ENCODE measurements at regions of chr2 and their contacts with region 1.

Region 1: DNA sequence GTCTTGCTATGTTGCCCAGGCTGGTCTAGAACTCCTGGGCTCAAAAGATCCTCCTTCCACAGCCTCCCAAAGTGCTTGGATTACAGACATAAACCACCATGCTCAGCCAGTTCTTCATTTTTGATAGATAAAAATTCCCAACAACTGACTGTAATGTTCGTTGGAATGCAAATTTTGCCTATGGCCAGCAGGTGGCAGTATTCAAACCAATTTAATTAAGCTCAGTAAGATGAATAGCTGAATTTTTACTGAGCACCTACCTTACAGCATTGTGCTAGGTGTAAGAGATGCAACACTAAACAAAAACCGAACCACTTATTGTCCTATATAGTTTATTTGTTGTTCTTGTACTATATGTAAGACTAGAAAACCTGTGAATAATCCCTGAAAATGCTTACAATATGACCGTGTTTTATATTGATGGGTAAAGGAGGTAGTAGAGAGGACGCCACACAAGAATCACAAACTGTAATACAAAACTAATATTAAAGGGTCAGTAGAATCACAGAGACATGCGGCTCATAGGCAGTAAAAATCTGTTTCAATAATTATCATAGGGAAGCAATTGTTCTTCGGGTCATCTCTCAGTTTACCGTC is 8.2 kb upstream of the TMEM182 start:
- DNase-seq: peak; percentile 32
- ATAC-seq: peak; percentile 62
- H3K4me3 ChIP-seq: no peak overlapping the region
- H3K27ac ChIP-seq: no peak overlapping the region
- H3K4me1 ChIP-seq: no peaks in the 10 kb centered on the region
- H3K27me3 ChIP-seq: no peaks in the 10 kb centered on the region
- CTCF ChIP-seq: peak; percentile 40 to 84 (median 66); a peak in 5 of 6 replicates
- POLR2A ChIP-seq: no peak
- RAD21 ChIP-seq: 0 out of 2 replicates have a peak, but pooled peaks have one; percentile 24

Region 2: GRCh38 chr2:102639429-102639828 is 114.2 kb before region 1 on chr2:
- CTCF ChIA-PET with region 1: no interaction called
- POLR2A ChIA-PET with region 1: no interaction called
- RAD21 ChIA-PET with region 1: no interaction called
- intact Hi-C with region 1: no loop called
- DNase-seq: no peak
- ATAC-seq: no peak
- H3K4me3 ChIP-seq: no peak overlapping the region
- H3K27ac ChIP-seq: no peak overlapping the region
- H3K4me1 ChIP-seq: no peaks in the 10 kb centered on the region
- H3K27me3 ChIP-seq: 0 out of 2 replicates have a peak, but pooled peaks cover 5% of the 10 kb centered on the region
- CTCF ChIP-seq: no peak
- POLR2A ChIP-seq: no peak
- RAD21 ChIP-seq: no peak

Region 3: DNA sequence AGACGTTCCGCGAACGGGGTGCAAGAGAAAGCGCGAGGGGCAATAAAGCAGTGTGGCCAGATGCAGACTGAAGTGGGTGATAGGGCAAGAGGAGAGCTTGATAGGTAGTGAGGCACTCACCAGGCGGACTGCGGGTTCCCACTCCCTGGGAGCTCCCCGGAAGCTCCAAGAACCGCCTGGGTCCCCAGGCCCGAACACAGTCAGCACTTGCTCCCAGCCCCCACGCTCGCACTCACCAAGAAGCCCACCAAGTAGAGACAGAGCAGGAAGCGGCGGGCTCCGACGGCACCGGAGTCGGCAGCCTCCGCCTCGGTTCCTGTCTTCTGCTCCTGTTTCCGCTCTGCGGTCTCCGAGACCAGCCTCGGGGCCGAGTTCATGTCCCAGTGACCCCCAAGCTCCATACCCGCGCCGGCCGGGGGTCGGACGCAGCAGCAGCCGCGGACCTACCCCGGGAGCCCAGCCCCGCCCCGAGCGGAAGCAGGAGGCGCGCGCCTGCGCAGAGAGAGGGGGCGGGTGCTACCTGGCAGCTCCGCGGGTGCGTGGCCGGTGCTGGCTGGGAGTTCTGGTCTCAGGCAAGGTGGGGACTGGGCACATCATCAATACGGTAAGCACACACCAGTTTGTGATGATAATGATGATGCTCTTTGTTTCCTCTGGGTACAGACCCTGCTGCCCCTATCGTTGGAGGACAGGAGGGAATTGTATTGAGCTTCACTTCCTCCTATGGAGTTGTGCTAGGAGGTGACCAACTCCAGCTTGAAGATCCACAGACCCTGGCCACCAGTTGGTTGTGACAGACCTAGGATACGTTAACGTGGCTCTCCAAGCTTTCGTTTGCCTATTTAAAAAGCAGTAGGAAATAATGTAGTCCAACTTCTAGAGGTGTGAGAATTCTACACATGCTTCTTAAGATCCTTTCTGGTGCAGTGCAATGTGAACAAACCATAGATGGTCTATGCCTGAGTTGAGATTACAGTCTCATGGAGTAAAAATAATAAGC is 17.0 kb before region 1 on chr2:
- CTCF ChIA-PET with region 1: interaction called, 34 read pairs
- POLR2A ChIA-PET with region 1: no interaction called
- RAD21 ChIA-PET with region 1: no interaction called
- intact Hi-C with region 1: no loop called
- DNase-seq: peak; percentile 47
- ATAC-seq: peak; percentile 96
- H3K4me3 ChIP-seq: peak overlapping the region; percentile 87 to 90
- H3K27ac ChIP-seq: peak overlapping the region; percentile 53; the same call in 1 of the 2 replicates
- H3K4me1 ChIP-seq: peaks cover 7 to 18% of the 10 kb centered on the region in 2 experiments; a peak in 3 of 4 replicates
- H3K27me3 ChIP-seq: no peaks in the 10 kb centered on the region
- CTCF ChIP-seq: no peak
- POLR2A ChIP-seq: peak; percentile 92
- RAD21 ChIP-seq: no peak